Activated T-helper 1 cell treated with anti-CD3 and anti-CD28 coated beads, Interleukin-12 subunit alpha, Interleukin-12 subunit beta, Interleukin-2, Interleukin-4 antibody, amounts not matched to agents 30 ng/mL and 10 ng/mL and 1 ng/mL, durations not matched to agents 14 hours and 24 hours and 36 hours (primary cell): ENCODE measurements at regions of chr7 and their contacts with region 1.

Region 1: GRCh38 chr7:88357781-88358525 is 51.3 kb upstream of the STEAP4 start:
- DNase-seq: no peak
- H3K4me3 Mint-ChIP-seq: no peak overlapping the region
- H3K27ac Mint-ChIP-seq: no peak overlapping the region
- H3K4me1 Mint-ChIP-seq: no peaks in the 10 kb centered on the region
- H3K27me3 Mint-ChIP-seq: no peaks in the 10 kb centered on the region

Region 2: DNA sequence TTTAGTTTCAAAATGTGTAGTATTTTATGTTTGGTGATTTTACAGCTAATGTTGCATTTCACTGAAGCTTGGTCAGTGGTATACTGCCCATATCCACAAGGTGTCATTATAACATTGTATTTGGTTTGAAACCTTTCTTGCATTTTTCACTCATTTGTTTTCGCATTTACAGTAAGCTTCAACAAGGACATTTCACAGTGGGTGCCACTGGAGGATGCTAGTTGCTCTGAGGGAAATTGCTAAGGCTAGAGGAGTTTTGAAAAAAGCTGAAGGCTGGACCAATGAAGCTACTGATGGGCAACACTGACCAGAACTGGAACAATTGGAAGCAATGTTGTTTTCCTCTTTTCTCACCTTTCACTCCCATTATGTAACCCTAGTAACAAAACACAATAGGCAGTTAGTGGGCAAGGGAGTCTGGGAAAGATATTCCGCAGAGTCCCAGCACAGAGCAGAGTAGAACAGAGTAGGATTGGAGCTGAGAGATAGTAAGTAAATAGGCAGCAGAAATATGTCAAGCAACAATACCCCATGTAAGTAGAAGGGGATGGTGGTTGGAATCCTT is 114.5 kb before region 1 on chr7:
- intact Hi-C with region 1: loop called (anchors 1 kb)
- DNase-seq: no peak
- H3K4me3 Mint-ChIP-seq: no peak overlapping the region
- H3K27ac Mint-ChIP-seq: no peak overlapping the region
- H3K4me1 Mint-ChIP-seq: no peaks in the 10 kb centered on the region
- H3K27me3 Mint-ChIP-seq: peaks cover 11% of the 10 kb centered on the region

Region 3: DNA sequence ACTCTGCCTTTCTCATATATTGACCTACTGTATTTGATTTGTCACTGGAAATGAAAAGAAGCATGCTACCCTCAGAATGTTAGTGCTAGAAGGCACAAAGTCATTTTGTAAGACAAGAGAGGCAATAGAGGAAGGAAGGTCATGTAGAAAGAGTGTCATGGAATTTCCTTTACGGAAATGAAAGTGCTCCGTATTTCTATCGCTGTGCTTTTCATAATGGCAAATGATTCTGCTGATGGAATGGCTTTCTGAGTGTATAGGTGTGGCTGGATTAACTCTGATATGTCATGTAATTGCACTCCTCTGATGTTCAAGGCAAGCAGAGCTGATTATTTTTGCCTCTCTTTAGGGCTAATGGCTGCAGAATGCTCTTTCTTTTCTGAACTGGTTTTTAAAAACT is 35.8 kb before region 1 on chr7:
- intact Hi-C with region 1: loop called (anchors 1 kb)
- DNase-seq: no peak
- H3K4me3 Mint-ChIP-seq: no peak overlapping the region
- H3K27ac Mint-ChIP-seq: no peak overlapping the region
- H3K4me1 Mint-ChIP-seq: no peaks in the 10 kb centered on the region
- H3K27me3 Mint-ChIP-seq: peaks cover 3% of the 10 kb centered on the region